GM10248 (cell line): ENCODE measurements at regions of chr1 and their contacts with region 1.

Region 1: GRCh38 chr1:87084244-87084836 is 169.9 kb downstream of the HS2ST1 start:
- DNase-seq: peak; percentile 23
- CTCF ChIP-seq: peak; percentile 20

Region 2: GRCh38 chr1:86825319-86825718 is 259.0 kb before region 1 on chr1:
- CTCF ChIA-PET with region 1: interaction called, 119 read pairs
- POLR2A ChIA-PET with region 1: no interaction called
- DNase-seq: no peak
- CTCF ChIP-seq: no peak

Region 3: GRCh38 chr1:86860020-86860419 is 224.3 kb before region 1 on chr1:
- CTCF ChIA-PET with region 1: interaction called, 11 read pairs
- POLR2A ChIA-PET with region 1: no interaction called
- DNase-seq: no peak
- CTCF ChIP-seq: no peak

Region 4: GRCh38 chr1:87051965-87052364 is 32.4 kb before region 1 on chr1:
- CTCF ChIA-PET with region 1: interaction called, 18 read pairs
- POLR2A ChIA-PET with region 1: no interaction called
- DNase-seq: no peak
- CTCF ChIP-seq: no peak

Region 5: DNA sequence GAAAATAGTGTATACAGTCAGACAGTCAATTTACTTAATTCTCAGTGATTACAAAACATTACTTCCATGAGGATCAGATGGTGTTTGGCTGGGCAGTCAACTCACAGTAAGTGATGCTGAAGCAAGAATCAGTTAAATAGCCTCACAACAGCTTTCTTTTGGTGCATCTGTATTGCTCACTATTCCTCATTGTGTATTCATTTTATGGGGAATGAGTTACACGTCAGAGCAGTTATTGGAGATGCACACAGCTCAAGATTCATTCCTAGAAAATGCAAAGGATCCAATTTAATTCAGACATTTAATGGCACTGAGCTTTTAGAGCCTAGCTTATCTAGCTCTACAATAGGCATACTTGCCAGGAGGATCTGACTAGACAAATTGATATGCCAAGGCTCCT is 19.4 kb before region 1 on chr1:
- CTCF ChIA-PET with region 1: interaction called, 51 read pairs
- POLR2A ChIA-PET with region 1: no interaction called
- DNase-seq: no peak
- CTCF ChIP-seq: no peak

Region 6: DNA sequence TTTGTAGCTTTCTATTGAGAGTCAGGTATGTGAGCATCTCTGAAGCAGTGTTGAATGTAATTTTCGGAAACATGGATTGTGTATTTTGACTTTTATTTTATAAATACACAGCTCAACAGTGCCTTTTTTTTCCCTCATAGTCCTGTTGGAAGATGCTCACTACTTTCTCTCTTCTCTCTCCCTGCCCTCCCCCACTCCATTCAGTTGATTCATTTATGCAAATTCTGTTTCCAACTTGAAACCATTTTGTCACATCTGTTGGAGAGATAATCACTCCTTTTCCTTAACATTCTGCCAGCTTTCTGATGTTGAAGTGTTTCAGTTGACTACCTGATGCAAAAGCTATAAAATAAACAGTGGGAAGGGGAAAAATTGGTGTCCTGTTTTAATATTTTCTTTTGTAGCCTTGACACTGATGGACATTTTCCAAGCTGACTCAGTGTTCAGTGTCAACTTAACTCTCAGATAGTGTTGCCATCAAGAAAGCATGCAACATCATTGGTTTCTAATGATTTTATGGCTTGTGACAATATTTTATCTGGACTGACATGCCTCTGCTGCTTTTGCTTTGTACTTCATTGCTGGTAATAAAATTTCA is 24.6 kb after region 1 on chr1:
- CTCF ChIA-PET with region 1: interaction called, 11 read pairs
- POLR2A ChIA-PET with region 1: no interaction called
- DNase-seq: no peak
- CTCF ChIP-seq: no peak